A673 (cell line): ENCODE measurements at regions of chr12 and their contacts with region 1.

Region 1: GRCh38 chr12:58074259-58074658 is 132.9 kb downstream of the ATP23 start:
- DNase-seq: no peak
- H3K4me3 ChIP-seq: no peak overlapping the region
- H3K27ac ChIP-seq: no peak overlapping the region
- H3K4me1 ChIP-seq: no peaks in the 10 kb centered on the region
- H3K27me3 ChIP-seq: no peaks in the 10 kb centered on the region
- CTCF ChIP-seq: no peak

Region 2: GRCh38 chr12:59014885-59015284 is 940.6 kb after region 1 on chr12:
- CTCF ChIA-PET with region 1: no interaction called
- POLR2A ChIA-PET with region 1: no interaction called
- intact Hi-C with region 1: loop called (anchors 5 kb)
- DNase-seq: no peak
- H3K4me3 ChIP-seq: no peak overlapping the region
- H3K27ac ChIP-seq: no peak overlapping the region
- H3K4me1 ChIP-seq: no peaks in the 10 kb centered on the region
- H3K27me3 ChIP-seq: no peaks in the 10 kb centered on the region
- CTCF ChIP-seq: no peak